ENCODE measurements at regions of chr13 and their contacts with region 1.

Region 1: GRCh38 chr13:99176309-99177276 is 24.1 kb upstream of the UBAC2 start:
- DNase-seq: peak; percentile 69 to 79 (median 75)
- H3K4me3 ChIP-seq: peak overlapping the region in 1 of 2 donors; percentile 19
- H3K4me3 Mint-ChIP-seq: peak overlapping the region in 7 of 8 donors; percentile 62 to 80 (median 71)
- H3K27ac ChIP-seq: no peak overlapping the region
- H3K27ac Mint-ChIP-seq: peak overlapping the region in 6 of 7 donors; percentile 37 to 81 (median 68)
- H3K4me1 ChIP-seq: peaks cover 44% of the 10 kb centered on the region
- H3K4me1 Mint-ChIP-seq: peaks cover 32 to 43% (median 36%) of the 10 kb centered on the region in 4 donors
- H3K27me3 ChIP-seq: no peaks in the 10 kb centered on the region
- H3K27me3 Mint-ChIP-seq: no peaks in the 10 kb centered on the region

Region 2: DNA sequence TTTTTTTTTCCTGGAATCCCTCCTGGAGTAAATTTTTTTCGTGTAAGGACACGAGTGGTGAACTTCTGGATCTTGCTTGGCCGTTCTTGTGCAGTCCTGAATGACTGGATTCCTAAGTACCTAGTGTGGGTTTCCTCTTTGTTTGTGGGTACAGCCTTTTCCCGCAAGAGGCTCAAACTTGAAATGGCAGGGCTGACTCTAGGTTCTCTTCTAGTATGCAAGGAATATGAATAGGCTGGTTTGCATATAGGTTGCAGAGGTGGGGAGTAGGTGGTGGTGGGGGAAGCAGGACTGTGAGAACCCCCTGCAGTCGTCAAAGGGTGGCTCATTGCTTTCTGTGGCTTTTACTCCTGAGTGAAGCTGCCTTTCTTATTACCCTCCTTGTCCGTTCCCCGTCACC is 37.6 kb after region 1 on chr13:
- CTCF ChIA-PET with region 1: interaction called, 10 read pairs
- POLR2A ChIA-PET with region 1: interaction called, 3 read pairs
- intact Hi-C with region 1: no loop called
- DNase-seq: peak in 1 of 5 donors; percentile 61
- H3K4me3 ChIP-seq: peak overlapping the region in 1 of 2 donors; percentile 62
- H3K4me3 Mint-ChIP-seq: peak overlapping the region; percentile 73 to 97 (median 94)
- H3K27ac ChIP-seq: peak overlapping the region; percentile 68
- H3K27ac Mint-ChIP-seq: peak overlapping the region; percentile 96 to 99 (median 99)
- H3K4me1 ChIP-seq: peaks cover 78% of the 10 kb centered on the region
- H3K4me1 Mint-ChIP-seq: peaks cover 55 to 92% (median 74%) of the 10 kb centered on the region in 4 donors
- H3K27me3 ChIP-seq: no peaks in the 10 kb centered on the region
- H3K27me3 Mint-ChIP-seq: no peaks in the 10 kb centered on the region

Region 3: GRCh38 chr13:99228737-99229691 is 52.4 kb after region 1 on chr13:
- CTCF ChIA-PET with region 1: interaction called, 10 read pairs
- POLR2A ChIA-PET with region 1: no interaction called
- intact Hi-C with region 1: no loop called
- DNase-seq: no peak
- H3K4me3 ChIP-seq: no peak overlapping the region
- H3K4me3 Mint-ChIP-seq: peak overlapping the region; percentile 33 to 91 (median 78)
- H3K27ac ChIP-seq: peak overlapping the region; percentile 52
- H3K27ac Mint-ChIP-seq: peak overlapping the region; percentile 63 to 92 (median 88)
- H3K4me1 ChIP-seq: peaks cover 86% of the 10 kb centered on the region
- H3K4me1 Mint-ChIP-seq: peaks cover 56 to 75% (median 65%) of the 10 kb centered on the region in 4 donors
- H3K27me3 ChIP-seq: no peaks in the 10 kb centered on the region
- H3K27me3 Mint-ChIP-seq: no peaks in the 10 kb centered on the region

Region 4: DNA sequence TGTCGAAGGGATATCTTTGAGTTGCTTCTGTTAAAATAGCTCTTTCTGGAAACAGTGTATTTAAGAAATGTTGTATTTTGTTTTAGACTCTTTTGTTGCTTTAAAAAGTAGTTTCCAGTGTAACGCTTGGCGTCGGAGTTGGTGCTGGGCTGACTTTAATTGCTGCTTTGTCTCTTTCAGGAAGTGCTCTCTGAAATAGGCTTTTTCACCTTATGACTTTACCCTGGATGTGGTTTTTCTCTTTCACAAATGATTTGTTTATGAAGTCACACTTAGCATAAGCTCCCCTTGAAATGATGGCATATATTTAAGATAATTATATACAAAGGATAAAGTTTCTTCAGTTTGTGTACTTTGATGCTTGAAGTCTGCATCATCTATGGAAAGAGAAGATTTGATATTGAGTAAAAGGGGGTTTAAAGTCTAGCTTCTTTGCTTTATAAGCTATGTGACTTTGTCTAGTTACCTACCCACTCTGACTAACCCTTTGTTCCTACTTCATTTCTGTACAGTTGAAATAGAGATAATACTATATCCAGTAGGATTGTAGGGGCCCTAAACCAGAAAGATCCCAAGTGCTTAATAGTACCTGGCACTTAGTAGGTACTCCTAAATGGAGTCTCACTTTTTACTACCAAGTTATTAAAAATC is 81.7 kb after region 1 on chr13 and contains the start of gene GPR18:
- CTCF ChIA-PET with region 1: interaction called, 567 read pairs
- POLR2A ChIA-PET with region 1: interaction called, 4 read pairs
- intact Hi-C with region 1: no loop called
- DNase-seq: peak; percentile 50 to 69 (median 62)
- H3K4me3 ChIP-seq: peak within 1 kb of the TSS; percentile 52 to 67
- H3K4me3 Mint-ChIP-seq: peak within 1 kb of the TSS; percentile 89 to 98 (median 94)
- H3K27ac ChIP-seq: peak within 1 kb of the TSS; percentile 60
- H3K27ac Mint-ChIP-seq: peak within 1 kb of the TSS; percentile 84 to 96 (median 94)
- H3K4me1 ChIP-seq: peaks cover 55% of the 10 kb centered on the region
- H3K4me1 Mint-ChIP-seq: peaks cover 47 to 85% (median 59%) of the 10 kb centered on the region in 4 donors
- H3K27me3 ChIP-seq: no peaks in the 10 kb centered on the region
- H3K27me3 Mint-ChIP-seq: no peaks in the 10 kb centered on the region
- total RNA-seq, gene GPR18: 21.5 to 22.8 TPM

Region 5: DNA sequence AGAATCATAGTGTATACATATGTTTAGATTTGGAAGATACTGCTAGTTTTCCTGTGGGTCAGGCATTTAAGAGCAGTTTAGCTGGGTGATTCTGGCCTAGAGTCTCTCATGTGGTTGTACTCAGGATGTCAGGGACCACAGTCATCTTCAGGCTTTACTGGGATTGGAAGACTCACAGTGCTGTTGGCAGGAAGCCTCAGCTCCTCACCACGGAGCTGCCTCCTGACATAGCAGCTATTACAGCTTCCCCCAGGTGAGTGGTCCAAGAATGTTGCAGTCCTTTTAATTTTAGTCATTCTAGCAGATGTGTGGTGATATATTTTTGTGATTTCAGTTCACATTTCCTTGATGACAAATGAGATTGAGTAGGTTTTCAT is 98.5 kb after region 1 on chr13:
- CTCF ChIA-PET with region 1: interaction called, 567 read pairs
- POLR2A ChIA-PET with region 1: interaction called, 5 read pairs
- intact Hi-C with region 1: no loop called
- DNase-seq: peak; percentile 46 to 67 (median 54)
- H3K4me3 ChIP-seq: peak overlapping the region in 1 of 2 donors; percentile 3
- H3K4me3 Mint-ChIP-seq: peak overlapping the region in 7 of 8 donors; percentile 43 to 86 (median 74)
- H3K27ac ChIP-seq: peak overlapping the region; percentile 11
- H3K27ac Mint-ChIP-seq: peak overlapping the region; percentile 80 to 98 (median 94)
- H3K4me1 ChIP-seq: peaks cover 93% of the 10 kb centered on the region
- H3K4me1 Mint-ChIP-seq: peaks cover 79 to 99% (median 89%) of the 10 kb centered on the region in 4 donors
- H3K27me3 ChIP-seq: no peaks in the 10 kb centered on the region
- H3K27me3 Mint-ChIP-seq: no peaks in the 10 kb centered on the region

Region 6: GRCh38 chr13:99442273-99442895 is 265.8 kb after region 1 on chr13:
- CTCF ChIA-PET with region 1: interaction called, 43 read pairs
- POLR2A ChIA-PET with region 1: interaction called, 5 read pairs
- intact Hi-C with region 1: loop called (anchors 1 kb)
- DNase-seq: peak; percentile 66 to 74 (median 71)
- H3K4me3 ChIP-seq: no peak overlapping the region
- H3K4me3 Mint-ChIP-seq: no peak overlapping the region
- H3K27ac ChIP-seq: no peak overlapping the region
- H3K27ac Mint-ChIP-seq: peak overlapping the region in 1 of 7 donors; percentile 9
- H3K4me1 ChIP-seq: peaks cover 3% of the 10 kb centered on the region
- H3K4me1 Mint-ChIP-seq: peaks cover 4 to 10% (median 6%) of the 10 kb centered on the region in 4 donors
- H3K27me3 ChIP-seq: no peaks in the 10 kb centered on the region
- H3K27me3 Mint-ChIP-seq: peaks cover 1 to 3% of the 10 kb centered on the region in 2 donors

Measured in CD4-positive, alpha-beta memory T cell (primary cell).